HEK293 (cell line): ENCODE measurements at regions of chr7 and their contacts with region 1.

Region 1: DNA sequence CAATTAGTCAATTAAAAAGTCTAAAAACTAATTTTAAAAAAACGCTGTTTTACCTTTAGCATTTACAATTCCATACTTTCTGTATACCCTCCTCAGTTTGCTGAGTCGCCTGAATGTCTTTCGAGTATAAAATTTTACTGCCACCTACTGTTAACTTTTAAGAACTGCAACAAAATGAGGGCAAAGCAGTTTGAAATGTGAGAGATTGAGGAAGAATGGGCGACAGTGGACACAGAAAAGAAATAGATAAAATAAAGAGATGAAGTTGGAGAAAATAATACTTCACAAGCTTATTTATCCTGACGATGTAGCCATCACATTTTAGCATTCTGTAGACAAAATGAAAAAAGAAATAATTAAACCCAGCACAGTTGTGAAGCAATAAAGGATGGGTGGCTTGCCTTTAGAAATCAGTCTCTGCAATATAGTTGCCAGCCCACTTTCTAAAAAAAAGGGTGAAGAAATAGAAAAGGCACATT is 110.8 kb upstream of the PTN start:
- H3K4me3 ChIP-seq: no peak overlapping the region
- H3K27ac ChIP-seq: no peak overlapping the region
- H3K4me1 ChIP-seq: no peaks in the 10 kb centered on the region
- CTCF ChIP-seq: no peak

Region 2: GRCh38 chr7:137169282-137169698 is 285.0 kb before region 1 on chr7:
- CTCF ChIA-PET with region 1: interaction called, 13 read pairs
- POLR2A ChIA-PET with region 1: no interaction called
- H3K4me3 ChIP-seq: no peak overlapping the region
- H3K27ac ChIP-seq: no peak overlapping the region
- H3K4me1 ChIP-seq: no peaks in the 10 kb centered on the region
- CTCF ChIP-seq: 0 out of 2 replicates have a peak, but pooled peaks have one; percentile 15